Caco-2 (cell line): ENCODE measurements at regions of chr10 and their contacts with region 1.

Region 1: DNA sequence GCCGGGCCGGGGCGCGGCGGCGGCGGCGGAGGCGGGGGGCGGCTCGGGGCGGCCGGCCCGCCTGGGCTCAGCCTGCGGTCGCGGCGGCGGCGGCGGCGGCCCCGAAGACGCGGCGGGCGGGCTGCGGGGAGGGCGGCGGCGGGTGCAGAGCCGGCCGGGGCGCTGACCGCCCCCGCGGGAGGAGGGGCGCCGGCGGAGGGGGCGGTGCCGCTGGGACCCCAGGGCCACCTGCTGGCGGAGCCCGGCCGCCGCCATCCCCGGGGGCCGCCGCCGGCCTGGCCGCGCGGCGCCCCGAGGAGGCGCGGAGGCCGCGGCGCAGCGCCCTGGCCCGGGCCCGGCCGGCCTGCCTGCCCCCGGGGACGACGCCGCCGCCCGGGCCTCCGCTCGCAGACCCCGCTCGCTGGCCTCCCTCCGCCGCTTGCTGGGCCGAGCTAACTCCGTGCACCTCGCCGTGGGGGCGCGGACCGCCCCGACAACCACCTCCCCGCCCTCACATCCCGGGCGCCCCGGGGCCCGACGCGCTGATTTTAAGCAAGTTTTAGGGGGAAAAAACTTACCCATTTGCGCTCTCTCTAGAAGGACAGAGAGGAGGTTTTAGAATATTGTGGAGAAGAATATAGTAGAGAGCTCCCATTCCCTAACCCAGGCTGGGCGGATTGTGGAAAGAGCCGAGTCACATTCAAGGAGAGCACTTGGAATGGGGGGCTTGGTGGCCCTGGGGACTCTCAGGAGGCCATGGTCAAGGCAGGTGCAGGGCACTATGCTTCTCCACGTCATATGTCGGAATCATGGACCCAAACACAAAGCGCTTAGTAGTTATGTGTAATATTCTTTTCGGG is at the start of gene BEND7:
- DNase-seq: peak in 1 of 2 experiments; percentile 85
- H3K4me3 ChIP-seq: peak within 1 kb of the TSS; percentile 46
- H3K4me3 Mint-ChIP-seq: peak within 1 kb of the TSS; percentile 73
- H3K27ac Mint-ChIP-seq: peak within 1 kb of the TSS; percentile 34
- H3K4me1 ChIP-seq: peaks cover 23% of the 10 kb centered on the region
- H3K4me1 Mint-ChIP-seq: peaks cover 26% of the 10 kb centered on the region
- H3K27me3 ChIP-seq: no peaks in the 10 kb centered on the region
- H3K27me3 Mint-ChIP-seq: peaks cover 6% of the 10 kb centered on the region
- CTCF ChIP-seq: no peak
- total RNA-seq, gene BEND7: 24.6 and 27.8 TPM in 2 replicates

Region 2: GRCh38 chr10:13586676-13587355 is 57.7 kb after region 1 on chr10 and contains the start of gene PRPF18:
- CTCF ChIA-PET with region 1: no interaction called
- POLR2A ChIA-PET with region 1: no interaction called
- intact Hi-C with region 1: loop called (anchors 5 kb)
- DNase-seq: peak; percentile 96 to 97
- H3K4me3 ChIP-seq: peak within 1 kb of the TSS; percentile 82
- H3K4me3 Mint-ChIP-seq: peak within 1 kb of the TSS; percentile 95
- H3K27ac Mint-ChIP-seq: peak within 1 kb of the TSS; percentile 88
- H3K4me1 ChIP-seq: no peaks in the 10 kb centered on the region
- H3K4me1 Mint-ChIP-seq: no peaks in the 10 kb centered on the region
- H3K27me3 ChIP-seq: no peaks in the 10 kb centered on the region; the same call in 1 of the 2 replicates
- H3K27me3 Mint-ChIP-seq: peaks cover 5% of the 10 kb centered on the region
- CTCF ChIP-seq: peak; percentile 98 to 100
- total RNA-seq, gene PRPF18: 31.0 and 32.0 TPM in 2 replicates